ENCODE measurements at regions of chr2 and their contacts with region 1.

Region 1: DNA sequence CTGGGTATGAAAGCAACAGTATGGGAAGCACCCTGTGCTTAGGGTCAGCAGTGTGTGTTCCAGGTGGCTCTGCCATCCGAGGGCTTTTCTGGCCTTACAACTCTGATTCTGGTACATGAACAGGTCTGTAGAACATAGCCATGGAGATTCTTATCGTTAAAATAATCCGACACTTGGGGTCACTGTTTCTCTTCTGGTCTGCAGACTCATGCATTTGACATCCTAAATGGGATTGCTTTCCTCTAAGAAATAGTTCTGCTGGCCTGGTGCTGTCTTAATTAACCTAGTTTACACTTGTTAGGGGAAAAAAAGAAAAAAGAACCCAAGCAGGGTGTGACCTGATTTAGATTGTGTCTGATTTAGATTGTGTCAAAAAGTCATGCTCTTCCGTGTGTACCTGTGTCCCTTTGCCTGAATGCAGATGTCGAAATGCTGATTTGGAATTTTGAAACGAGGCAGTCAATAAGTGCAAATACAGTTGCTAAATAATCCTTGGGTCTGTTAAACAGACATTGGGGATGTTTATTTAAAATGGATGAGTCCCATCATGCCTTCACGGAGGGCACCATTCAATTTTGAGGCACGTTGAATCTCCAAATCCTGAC is 59.6 kb downstream of the TRPM8 start:
- DNase-seq: peak; percentile 22

Region 2: DNA sequence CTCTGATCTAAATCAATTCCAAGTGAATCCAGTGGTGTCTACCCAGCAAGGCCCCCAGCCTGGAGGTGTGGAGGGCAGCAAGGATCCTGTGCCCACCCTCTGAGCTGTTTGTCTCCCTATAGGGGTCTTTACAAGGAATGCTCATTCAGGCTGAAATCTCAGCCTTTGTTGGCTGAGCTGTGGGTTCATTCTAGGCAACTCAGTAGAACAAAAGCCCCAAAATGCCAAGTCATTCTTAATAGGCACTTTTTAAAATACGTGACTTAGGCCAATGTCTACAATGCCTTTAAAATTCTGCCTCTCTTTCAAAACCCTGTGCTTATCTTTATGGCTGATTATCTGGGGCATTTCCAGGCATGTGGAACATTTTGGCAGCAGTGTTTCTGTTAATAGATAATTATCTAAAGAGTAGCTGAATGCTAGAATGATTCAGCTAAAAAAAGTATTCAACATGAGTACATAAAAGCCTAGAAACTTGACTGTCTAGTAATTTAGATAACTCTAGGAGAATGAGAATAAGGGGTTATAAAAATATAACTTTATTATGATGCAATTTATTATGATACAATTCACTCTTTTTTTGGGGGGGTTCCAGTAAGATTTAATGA is 276.7 kb before region 1 on chr2:
- intact Hi-C with region 1: no loop called
- DNase-seq: no peak

Region 3: DNA sequence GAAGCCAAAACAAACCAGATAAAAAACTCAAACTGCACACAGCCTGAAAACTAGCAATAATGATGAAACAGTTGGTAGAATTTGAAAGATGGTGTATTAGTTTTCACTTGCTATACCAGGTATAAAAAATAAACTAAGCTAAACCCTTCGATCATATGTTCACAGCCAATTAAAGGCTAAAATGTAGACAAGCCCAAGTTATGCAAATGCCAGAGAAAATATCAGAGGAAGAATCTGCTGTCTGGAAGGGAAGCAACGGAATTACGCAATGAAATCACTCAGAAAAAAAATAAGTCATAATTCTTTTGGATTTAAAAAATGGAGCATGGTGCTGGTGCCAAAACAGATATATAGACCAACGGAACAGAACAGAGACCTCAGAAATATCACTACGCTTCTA is 411.8 kb after region 1 on chr2:
- intact Hi-C with region 1: no loop called
- DNase-seq: no peak

Region 4: GRCh38 chr2:234544659-234545611 is 568.1 kb after region 1 on chr2:
- intact Hi-C with region 1: loop called (anchors 5 kb)
- DNase-seq: peak; percentile 79